CD4-positive, alpha-beta T cell (primary cell): ENCODE measurements at regions of chr3 and their contacts with region 1.

Region 1: DNA sequence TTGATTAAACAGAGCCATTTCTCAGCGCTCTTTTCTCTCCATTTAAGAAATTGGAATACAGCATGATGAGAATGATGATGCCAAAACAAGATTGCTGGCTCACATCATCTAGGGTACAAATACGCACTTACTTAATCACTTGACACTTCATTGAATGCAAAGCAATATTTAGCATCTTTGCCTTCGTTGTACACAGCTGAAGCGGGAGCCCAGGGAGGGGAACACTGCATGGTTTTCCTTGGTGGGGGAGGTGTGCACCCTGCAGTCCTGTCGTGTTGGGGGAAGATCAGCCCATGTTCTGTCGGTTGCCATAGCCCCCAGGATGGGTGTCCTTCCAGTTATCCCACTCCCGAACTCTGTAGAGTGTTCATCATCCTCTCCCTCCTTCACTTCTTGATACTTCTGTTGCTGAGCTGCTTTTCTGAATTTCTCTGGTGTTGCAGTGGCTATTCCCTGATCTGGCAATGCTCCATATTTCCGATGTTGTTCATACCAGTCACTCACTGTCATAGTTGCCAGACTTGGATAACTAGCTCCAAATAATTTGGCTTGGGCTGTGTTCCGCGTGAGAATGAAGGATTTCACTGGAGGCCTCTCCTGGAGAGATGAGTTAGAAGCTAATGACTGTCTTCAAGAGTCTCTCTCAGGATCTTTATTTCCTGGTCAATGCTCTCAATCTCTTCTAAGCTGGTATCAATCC is 50.1 kb upstream of the DYNC1LI1 start:
- DNase-seq: no peak
- ATAC-seq: no peak
- H3K4me3 ChIP-seq: no peak overlapping the region
- H3K4me3 Mint-ChIP-seq: no peak overlapping the region
- H3K27ac ChIP-seq: no peak overlapping the region
- H3K27ac Mint-ChIP-seq: no peak overlapping the region
- H3K4me1 ChIP-seq: no peaks in the 10 kb centered on the region
- H3K4me1 Mint-ChIP-seq: no peaks in the 10 kb centered on the region
- H3K27me3 ChIP-seq: no peaks in the 10 kb centered on the region
- H3K27me3 Mint-ChIP-seq: peaks cover 4% of the 10 kb centered on the region
- CTCF ChIP-seq: no peak

Region 2: GRCh38 chr3:32593903-32594525 is 26.7 kb before region 1 on chr3:
- CTCF ChIA-PET with region 1: no interaction called
- POLR2A ChIA-PET with region 1: no interaction called
- intact Hi-C with region 1: loop called in 1 of 2 experiments (anchors 1 kb)
- DNase-seq: no peak
- ATAC-seq: no peak
- H3K4me3 ChIP-seq: no peak overlapping the region
- H3K4me3 Mint-ChIP-seq: no peak overlapping the region
- H3K27ac ChIP-seq: no peak overlapping the region
- H3K27ac Mint-ChIP-seq: no peak overlapping the region
- H3K4me1 ChIP-seq: no peaks in the 10 kb centered on the region
- H3K4me1 Mint-ChIP-seq: no peaks in the 10 kb centered on the region
- H3K27me3 ChIP-seq: no peaks in the 10 kb centered on the region
- H3K27me3 Mint-ChIP-seq: peaks cover 25% of the 10 kb centered on the region
- CTCF ChIP-seq: no peak

Region 3: DNA sequence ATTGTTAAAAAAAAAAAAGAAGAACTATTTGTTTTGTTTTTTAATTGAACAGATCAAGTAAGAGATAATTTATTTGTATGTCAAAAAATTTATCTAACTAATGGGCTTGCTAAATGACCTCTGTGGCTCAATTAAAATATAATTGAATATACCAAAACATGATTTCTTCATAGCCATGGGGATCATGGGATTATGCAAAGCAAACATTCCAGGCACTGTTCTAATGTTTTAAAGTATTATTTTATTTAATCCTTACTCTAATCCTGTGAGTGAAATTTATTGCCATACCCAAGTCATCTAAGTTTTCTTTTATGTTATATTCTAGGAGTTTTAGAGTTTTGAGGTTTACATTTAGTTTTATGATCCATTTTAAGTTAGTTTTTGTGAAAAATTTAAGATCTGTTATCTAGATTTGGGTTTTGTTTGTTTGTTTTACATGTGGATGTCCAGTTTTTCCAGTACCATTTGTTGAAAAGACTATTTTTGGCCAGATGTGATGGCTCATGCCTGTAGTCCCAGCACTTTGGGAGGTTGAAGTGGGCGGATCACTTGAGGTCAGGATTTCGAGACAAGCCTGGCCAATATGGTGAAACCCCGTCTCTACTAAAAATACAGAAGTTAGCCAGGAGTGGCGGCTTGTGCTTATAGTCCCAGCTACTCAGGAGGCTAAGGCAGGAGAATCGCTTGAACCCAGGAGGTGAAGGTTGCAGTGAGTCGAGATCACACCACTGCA is 11.9 kb after region 1 on chr3:
- CTCF ChIA-PET with region 1: no interaction called
- POLR2A ChIA-PET with region 1: no interaction called
- intact Hi-C with region 1: no loop called
- DNase-seq: no peak
- ATAC-seq: no peak
- H3K4me3 ChIP-seq: no peak overlapping the region
- H3K4me3 Mint-ChIP-seq: no peak overlapping the region
- H3K27ac ChIP-seq: no peak overlapping the region
- H3K27ac Mint-ChIP-seq: no peak overlapping the region
- H3K4me1 ChIP-seq: no peaks in the 10 kb centered on the region
- H3K4me1 Mint-ChIP-seq: no peaks in the 10 kb centered on the region
- H3K27me3 ChIP-seq: no peaks in the 10 kb centered on the region
- H3K27me3 Mint-ChIP-seq: peaks cover 3% of the 10 kb centered on the region
- CTCF ChIP-seq: no peak